Caco-2 (cell line): ENCODE measurements at regions of chr10 and their contacts with region 1.

Region 1: GRCh38 chr10:11793762-11794479 is 29.2 kb upstream of the PROSER2 start:
- DNase-seq: peak; percentile 92 to 98
- H3K4me3 ChIP-seq: no peak overlapping the region; the same call in 1 of the 2 replicates
- H3K4me3 Mint-ChIP-seq: peak overlapping the region; percentile 56
- H3K27ac Mint-ChIP-seq: peak overlapping the region; percentile 92
- H3K4me1 ChIP-seq: peaks cover 38% of the 10 kb centered on the region
- H3K4me1 Mint-ChIP-seq: peaks cover 46% of the 10 kb centered on the region
- H3K27me3 ChIP-seq: no peaks in the 10 kb centered on the region
- H3K27me3 Mint-ChIP-seq: no peaks in the 10 kb centered on the region
- CTCF ChIP-seq: peak; percentile 21 to 26

Region 2: DNA sequence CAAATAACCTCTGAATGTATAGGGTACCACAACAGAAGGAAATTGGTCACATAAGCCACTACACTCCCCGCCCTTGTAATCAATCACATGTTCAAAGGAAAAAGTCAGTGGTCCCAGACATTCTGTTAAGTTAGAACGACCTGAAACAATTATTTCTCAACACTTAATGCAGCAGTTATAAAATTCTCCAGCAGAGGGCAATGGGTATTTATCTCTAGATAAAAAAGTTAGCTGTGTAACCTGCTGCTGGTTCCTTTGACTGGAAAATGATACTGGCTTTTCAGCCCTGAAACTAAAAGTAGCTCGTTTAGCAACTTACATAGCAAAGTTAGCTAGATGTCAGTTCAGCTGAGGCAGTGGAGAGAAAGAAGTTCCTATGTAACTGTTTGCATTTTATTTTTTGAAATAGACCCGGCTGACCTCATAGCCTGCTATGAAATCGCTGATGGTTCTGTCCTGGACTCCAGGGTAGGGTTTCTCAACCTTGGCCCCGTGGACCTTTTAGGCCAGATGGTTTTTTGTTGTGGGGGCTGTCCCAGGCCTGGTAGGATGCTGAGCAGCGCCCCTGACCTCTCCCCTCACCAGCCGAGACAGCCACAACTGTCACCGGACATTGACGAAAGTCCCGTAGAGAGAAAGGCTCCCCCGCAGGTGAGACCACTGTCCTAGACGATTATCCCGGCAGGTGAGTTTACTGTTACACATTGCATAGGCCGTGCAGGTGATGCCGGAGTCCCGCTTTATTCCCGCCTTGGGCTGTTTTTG is 10.9 kb before region 1 on chr10:
- CTCF ChIA-PET with region 1: interaction called, 47 read pairs
- POLR2A ChIA-PET with region 1: interaction called, 7 read pairs
- intact Hi-C with region 1: no loop called
- DNase-seq: peak in 1 of 2 experiments; percentile 84
- H3K4me3 ChIP-seq: no peak overlapping the region
- H3K4me3 Mint-ChIP-seq: peak overlapping the region; percentile 4
- H3K27ac Mint-ChIP-seq: peak overlapping the region; percentile 60
- H3K4me1 ChIP-seq: peaks cover 10% of the 10 kb centered on the region; the same call in 1 of the 2 replicates
- H3K4me1 Mint-ChIP-seq: peaks cover 8% of the 10 kb centered on the region
- H3K27me3 ChIP-seq: no peaks in the 10 kb centered on the region
- H3K27me3 Mint-ChIP-seq: no peaks in the 10 kb centered on the region
- CTCF ChIP-seq: peak; percentile 87 to 90

Region 3: DNA sequence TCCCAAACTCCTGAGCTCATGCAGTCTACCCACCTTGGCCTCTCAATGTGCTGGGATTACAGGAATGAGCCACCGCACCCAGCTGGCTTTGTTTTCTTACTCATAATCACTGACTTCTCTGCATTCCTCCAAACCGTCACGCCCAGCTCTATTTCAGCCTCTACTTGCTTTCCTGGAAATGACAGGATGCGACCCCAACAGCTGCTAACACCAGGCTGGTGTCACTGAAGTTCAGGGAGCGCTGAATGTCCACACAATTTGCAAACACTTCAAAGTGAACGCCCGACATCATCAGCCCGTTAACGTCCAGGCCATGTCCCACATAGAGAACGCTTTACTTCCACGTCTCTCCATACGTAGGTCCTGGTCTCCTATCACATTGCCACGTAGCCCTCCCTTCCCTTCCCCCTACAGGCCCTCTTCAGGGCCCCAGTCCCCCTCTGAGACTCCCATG is 16.4 kb after region 1 on chr10:
- CTCF ChIA-PET with region 1: interaction called, 22 read pairs
- POLR2A ChIA-PET with region 1: interaction called, 13 read pairs
- intact Hi-C with region 1: loop called (anchors 1 kb)
- DNase-seq: peak; percentile 61 to 78
- H3K4me3 ChIP-seq: no peak overlapping the region
- H3K4me3 Mint-ChIP-seq: peak overlapping the region; percentile 42
- H3K27ac Mint-ChIP-seq: peak overlapping the region; percentile 91
- H3K4me1 ChIP-seq: peaks cover 15% of the 10 kb centered on the region
- H3K4me1 Mint-ChIP-seq: peaks cover 30% of the 10 kb centered on the region
- H3K27me3 ChIP-seq: no peaks in the 10 kb centered on the region
- H3K27me3 Mint-ChIP-seq: no peaks in the 10 kb centered on the region
- CTCF ChIP-seq: no peak

Region 4: GRCh38 chr10:11823122-11823988 is 29.4 kb after region 1 on chr10 and contains the start of gene PROSER2:
- CTCF ChIA-PET with region 1: interaction called, 11 read pairs
- POLR2A ChIA-PET with region 1: interaction called, 9 read pairs
- intact Hi-C with region 1: loop called (anchors 1 kb)
- DNase-seq: peak; percentile 77 to 87
- H3K4me3 ChIP-seq: peak within 1 kb of the TSS; percentile 94
- H3K4me3 Mint-ChIP-seq: peak within 1 kb of the TSS; percentile 93
- H3K27ac Mint-ChIP-seq: peak within 1 kb of the TSS; percentile 79
- H3K4me1 ChIP-seq: peaks cover 43% of the 10 kb centered on the region
- H3K4me1 Mint-ChIP-seq: peaks cover 42% of the 10 kb centered on the region
- H3K27me3 ChIP-seq: no peaks in the 10 kb centered on the region
- H3K27me3 Mint-ChIP-seq: no peaks in the 10 kb centered on the region
- CTCF ChIP-seq: no peak
- total RNA-seq, gene PROSER2: 123 and 134 TPM in 2 replicates

Region 5: DNA sequence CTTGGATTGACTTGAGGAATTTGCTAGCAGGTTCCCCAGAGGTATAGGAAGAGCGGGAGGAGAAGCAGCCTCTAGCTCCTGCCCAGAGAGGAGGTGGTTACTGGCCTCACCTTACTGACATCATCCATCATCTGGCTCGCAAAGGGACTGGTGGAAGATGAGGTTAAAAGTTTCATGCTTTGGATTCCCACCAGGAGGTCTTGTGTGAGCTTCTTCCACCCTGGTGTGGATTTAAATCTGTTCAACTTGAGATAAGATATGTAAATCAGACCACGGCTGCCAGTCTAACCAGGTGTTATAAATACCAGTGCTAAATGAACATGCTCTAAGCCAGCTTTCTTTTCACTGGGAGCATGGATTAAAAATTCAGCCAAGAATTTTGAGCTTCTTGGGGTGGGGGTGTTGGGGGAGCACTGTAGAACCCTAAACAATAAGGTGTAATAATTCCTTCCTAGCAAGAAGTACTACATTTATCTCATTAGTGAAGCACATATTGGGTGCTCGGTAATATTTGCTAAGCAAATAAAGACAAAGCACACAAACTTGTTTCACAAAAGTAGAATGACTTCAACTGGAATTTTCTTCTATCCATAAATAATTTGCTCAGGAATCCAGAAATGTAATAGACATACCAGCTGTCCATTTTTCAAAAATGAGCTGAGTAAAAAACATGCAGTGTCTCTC is 37.1 kb after region 1 on chr10:
- CTCF ChIA-PET with region 1: interaction called, 9 read pairs
- POLR2A ChIA-PET with region 1: interaction called, 15 read pairs
- intact Hi-C with region 1: loop called (anchors 1 kb)
- DNase-seq: peak; percentile 83 to 89
- H3K4me3 ChIP-seq: no peak overlapping the region
- H3K4me3 Mint-ChIP-seq: peak overlapping the region; percentile 71
- H3K27ac Mint-ChIP-seq: peak overlapping the region; percentile 91
- H3K4me1 ChIP-seq: peaks cover 69% of the 10 kb centered on the region
- H3K4me1 Mint-ChIP-seq: peaks cover 46% of the 10 kb centered on the region
- H3K27me3 ChIP-seq: no peaks in the 10 kb centered on the region
- H3K27me3 Mint-ChIP-seq: no peaks in the 10 kb centered on the region
- CTCF ChIP-seq: no peak

Region 6: DNA sequence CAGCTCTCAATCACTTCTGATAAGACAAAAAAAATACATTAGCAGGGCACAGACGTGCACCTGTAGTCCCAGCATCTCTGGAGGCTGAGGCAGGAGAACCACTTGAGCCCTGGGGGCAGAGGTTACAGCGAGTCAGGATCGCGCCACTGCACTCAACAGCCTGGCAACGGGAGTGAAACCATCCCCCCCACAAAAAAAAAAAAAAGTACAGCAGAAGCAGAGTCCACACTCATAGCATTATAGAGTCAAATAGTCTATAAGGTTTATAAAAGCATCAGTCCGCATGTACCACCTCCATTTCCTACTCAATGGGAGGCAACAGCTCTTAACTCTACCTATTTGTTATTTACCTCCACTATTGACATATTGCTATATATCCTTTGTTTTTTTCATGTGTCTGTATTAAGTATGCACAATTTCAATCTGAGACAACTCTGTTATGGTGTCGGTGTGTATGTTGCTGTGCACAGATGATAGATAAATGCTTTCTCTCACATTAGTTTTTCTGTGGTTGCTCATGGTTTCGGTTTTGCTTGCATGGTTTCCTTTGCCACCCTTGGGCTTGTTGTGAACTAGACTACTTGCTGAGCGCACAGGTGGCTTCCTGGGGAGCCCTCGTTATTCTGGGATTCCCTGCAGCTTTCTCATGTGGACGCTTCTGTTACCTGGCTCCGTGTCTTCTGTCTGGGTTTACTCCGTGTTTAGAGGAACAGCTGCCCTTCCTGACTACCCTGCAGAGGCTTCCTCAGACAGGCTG is 69.6 kb after region 1 on chr10:
- CTCF ChIA-PET with region 1: no interaction called
- POLR2A ChIA-PET with region 1: no interaction called
- intact Hi-C with region 1: no loop called
- DNase-seq: peak in 1 of 2 experiments; percentile 22
- H3K4me3 ChIP-seq: no peak overlapping the region
- H3K4me3 Mint-ChIP-seq: no peak overlapping the region
- H3K27ac Mint-ChIP-seq: peak overlapping the region; percentile 42
- H3K4me1 ChIP-seq: no peaks in the 10 kb centered on the region; the same call in 1 of the 2 replicates
- H3K4me1 Mint-ChIP-seq: peaks cover 48% of the 10 kb centered on the region
- H3K27me3 ChIP-seq: no peaks in the 10 kb centered on the region
- H3K27me3 Mint-ChIP-seq: no peaks in the 10 kb centered on the region
- CTCF ChIP-seq: no peak

Region 7: GRCh38 chr10:11918384-11918783 is 124.5 kb after region 1 on chr10:
- CTCF ChIA-PET with region 1: interaction called, 4 read pairs
- POLR2A ChIA-PET with region 1: no interaction called
- intact Hi-C with region 1: loop called (anchors 5 kb)
- DNase-seq: peak in 1 of 2 experiments; percentile 32
- H3K4me3 ChIP-seq: no peak overlapping the region
- H3K4me3 Mint-ChIP-seq: no peak overlapping the region
- H3K27ac Mint-ChIP-seq: no peak overlapping the region
- H3K4me1 ChIP-seq: peaks cover 17% of the 10 kb centered on the region
- H3K4me1 Mint-ChIP-seq: peaks cover 7% of the 10 kb centered on the region
- H3K27me3 ChIP-seq: no peaks in the 10 kb centered on the region
- H3K27me3 Mint-ChIP-seq: no peaks in the 10 kb centered on the region
- CTCF ChIP-seq: no peak

Region 8: GRCh38 chr10:11986593-11987216 is 192.8 kb after region 1 on chr10:
- CTCF ChIA-PET with region 1: interaction called, 11 read pairs
- POLR2A ChIA-PET with region 1: interaction called, 3 read pairs
- intact Hi-C with region 1: loop called (anchors 1 kb)
- DNase-seq: peak; percentile 82 to 91
- H3K4me3 ChIP-seq: no peak overlapping the region
- H3K4me3 Mint-ChIP-seq: peak overlapping the region; percentile 20
- H3K27ac Mint-ChIP-seq: peak overlapping the region; percentile 20
- H3K4me1 ChIP-seq: peaks cover 11% of the 10 kb centered on the region
- H3K4me1 Mint-ChIP-seq: peaks cover 12% of the 10 kb centered on the region
- H3K27me3 ChIP-seq: no peaks in the 10 kb centered on the region
- H3K27me3 Mint-ChIP-seq: no peaks in the 10 kb centered on the region
- CTCF ChIP-seq: peak; percentile 96